CD8-positive, alpha-beta memory T cell (primary cell): ENCODE measurements at regions of chr1 and their contacts with region 1.

Region 1: DNA sequence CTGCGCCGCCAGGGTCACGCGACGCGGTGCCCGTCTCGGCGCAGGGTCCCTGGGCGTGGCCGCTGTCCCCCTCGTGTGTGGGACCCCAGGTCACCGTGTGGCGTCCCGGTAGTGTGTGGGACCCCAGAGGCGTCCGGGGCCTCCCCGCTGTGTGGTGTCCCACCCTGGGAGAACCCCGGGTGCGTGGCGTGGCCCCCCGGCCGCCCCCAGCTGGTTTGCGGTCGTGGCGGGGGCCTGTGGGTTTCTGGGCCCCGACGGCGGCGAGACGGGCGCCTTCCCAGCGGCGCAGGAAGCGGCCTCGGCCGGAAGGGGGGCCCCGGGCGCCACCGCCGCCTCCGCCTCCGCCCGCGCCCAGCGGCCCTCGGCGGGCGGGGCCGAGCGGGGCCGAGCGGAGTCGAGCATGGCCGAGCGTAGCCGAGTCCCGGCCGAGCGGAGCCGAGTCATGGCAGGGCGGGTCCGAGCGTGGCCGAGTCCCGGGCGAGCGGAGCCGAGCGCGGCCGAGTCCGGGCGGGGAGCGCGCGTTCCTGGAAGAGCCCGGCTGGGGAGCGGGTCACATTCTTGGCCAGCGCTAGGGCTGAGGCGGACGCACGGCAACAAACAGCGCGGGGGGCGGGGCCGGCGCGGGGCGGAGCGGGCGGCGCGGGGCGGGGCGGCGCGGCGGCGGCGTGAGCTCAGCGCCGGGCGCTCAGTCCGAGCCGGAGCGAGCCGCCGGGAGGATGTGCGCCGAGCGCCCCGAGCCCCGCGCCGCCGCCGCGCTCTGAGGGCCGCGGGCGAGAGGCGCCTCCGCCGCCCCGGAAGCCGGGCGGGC is 569 bp upstream of the SKI start:
- DNase-seq: peak; percentile 86 to 96 (median 95)
- H3K4me3 ChIP-seq: no peak overlapping the region
- H3K4me3 Mint-ChIP-seq: peak overlapping the region in 6 of 7 donors; percentile 61 to 90 (median 74)
- H3K27ac ChIP-seq: peak overlapping the region; percentile 51
- H3K27ac Mint-ChIP-seq: peak overlapping the region in 4 of 8 donors; percentile 60 to 86 (median 74)
- H3K4me1 ChIP-seq: peaks cover 26% of the 10 kb centered on the region
- H3K4me1 Mint-ChIP-seq: peaks cover 27 to 40% (median 36%) of the 10 kb centered on the region in 3 donors
- H3K27me3 ChIP-seq: no peaks in the 10 kb centered on the region
- H3K27me3 Mint-ChIP-seq: peaks cover 0 to 12% of the 10 kb centered on the region in 2 donors

Region 2: DNA sequence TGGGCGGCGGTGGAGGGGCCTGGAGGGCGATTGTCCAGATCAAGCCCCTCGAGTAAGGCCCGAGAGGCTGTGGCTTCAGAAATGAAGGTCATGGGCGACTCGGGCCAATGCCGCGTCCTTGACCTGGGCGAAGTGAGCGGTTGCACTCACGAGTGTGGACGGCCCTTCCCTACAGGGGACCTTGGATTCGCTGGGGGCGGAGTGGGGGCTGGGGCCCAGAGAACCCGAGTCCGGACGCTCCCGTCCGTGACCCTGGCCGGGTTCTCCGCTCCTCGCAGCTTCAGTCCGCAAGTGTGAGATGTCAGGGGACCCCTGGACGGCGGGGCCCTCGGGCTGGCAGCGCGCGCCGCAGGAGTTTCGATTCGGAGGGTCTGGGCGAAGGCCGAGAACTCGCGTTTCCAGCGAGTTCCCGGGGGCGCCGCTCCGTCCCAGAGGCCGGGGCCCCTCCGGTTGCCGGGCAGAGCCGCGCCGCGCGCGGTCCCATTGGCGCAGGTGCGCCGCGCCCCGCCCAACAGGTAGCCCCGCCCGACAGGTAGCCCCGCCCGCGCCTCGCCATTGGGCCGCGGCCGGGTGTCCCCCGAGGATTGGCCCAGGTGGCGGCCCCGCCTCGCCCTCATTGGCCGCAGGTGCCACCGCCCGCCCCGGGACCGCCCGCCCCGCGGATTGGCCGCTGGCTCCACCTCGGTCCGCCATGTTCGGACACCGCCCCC is 177.7 kb before region 1 on chr1 and contains the start of gene PRKCZ:
- CTCF ChIA-PET with region 1: no interaction called
- POLR2A ChIA-PET with region 1: no interaction called
- DNase-seq: peak; percentile 92 to 95 (median 94)
- H3K4me3 ChIP-seq: peak within 1 kb of the TSS; percentile 70
- H3K4me3 Mint-ChIP-seq: peak within 1 kb of the TSS; percentile 77 to 90 (median 83)
- H3K27ac ChIP-seq: peak within 1 kb of the TSS; percentile 43
- H3K27ac Mint-ChIP-seq: peak within 1 kb of the TSS in 7 of 8 donors; percentile 50 to 86 (median 68)
- H3K4me1 ChIP-seq: peaks cover 25% of the 10 kb centered on the region
- H3K4me1 Mint-ChIP-seq: peaks cover 13 to 41% (median 15%) of the 10 kb centered on the region in 3 donors
- H3K27me3 ChIP-seq: no peaks in the 10 kb centered on the region
- H3K27me3 Mint-ChIP-seq: peaks cover 6 to 8% of the 10 kb centered on the region in 2 donors
- total RNA-seq, gene PRKCZ: 13.8 to 15.4 TPM

Region 3: GRCh38 chr1:2279210-2279639 is 51.7 kb after region 1 on chr1:
- CTCF ChIA-PET with region 1: no interaction called
- POLR2A ChIA-PET with region 1: no interaction called
- DNase-seq: no peak
- H3K4me3 ChIP-seq: no peak overlapping the region
- H3K4me3 Mint-ChIP-seq: no peak overlapping the region
- H3K27ac ChIP-seq: no peak overlapping the region
- H3K27ac Mint-ChIP-seq: peak overlapping the region in 5 of 8 donors; percentile 42 to 89 (median 52)
- H3K4me1 ChIP-seq: peaks cover 38% of the 10 kb centered on the region
- H3K4me1 Mint-ChIP-seq: peaks cover 17 to 52% (median 19%) of the 10 kb centered on the region in 3 donors
- H3K27me3 ChIP-seq: no peaks in the 10 kb centered on the region
- H3K27me3 Mint-ChIP-seq: peaks cover 0 to 5% of the 10 kb centered on the region in 2 donors

Region 4: GRCh38 chr1:2314803-2315673 is 87.5 kb after region 1 on chr1:
- CTCF ChIA-PET with region 1: interaction called, 22 read pairs
- POLR2A ChIA-PET with region 1: interaction called, 6 read pairs
- DNase-seq: peak; percentile 58 to 84 (median 75)
- H3K4me3 ChIP-seq: peak overlapping the region; percentile 55
- H3K4me3 Mint-ChIP-seq: peak overlapping the region in 4 of 7 donors; percentile 41 to 74 (median 56)
- H3K27ac ChIP-seq: peak overlapping the region; percentile 38
- H3K27ac Mint-ChIP-seq: peak overlapping the region in 7 of 8 donors; percentile 30 to 96 (median 59)
- H3K4me1 ChIP-seq: peaks cover 44% of the 10 kb centered on the region
- H3K4me1 Mint-ChIP-seq: peaks cover 7 to 49% (median 10%) of the 10 kb centered on the region in 3 donors
- H3K27me3 ChIP-seq: no peaks in the 10 kb centered on the region
- H3K27me3 Mint-ChIP-seq: no peaks in the 10 kb centered on the region

Region 5: GRCh38 chr1:2391041-2391930 is 163.7 kb after region 1 on chr1 and contains the starts of genes MORN1 and RER1:
- CTCF ChIA-PET with region 1: interaction called, 3 read pairs
- POLR2A ChIA-PET with region 1: interaction called, 12 read pairs
- DNase-seq: peak; percentile 98 to 99 (median 99)
- H3K4me3 ChIP-seq: peak within 1 kb of the TSS; percentile 73
- H3K4me3 Mint-ChIP-seq: peak within 1 kb of the TSS; percentile 87 to 98 (median 90)
- H3K27ac ChIP-seq: peak within 1 kb of the TSS; percentile 82
- H3K27ac Mint-ChIP-seq: peak within 1 kb of the TSS; percentile 84 to 98 (median 92)
- H3K4me1 ChIP-seq: peaks cover 34% of the 10 kb centered on the region
- H3K4me1 Mint-ChIP-seq: peaks cover 27 to 49% (median 34%) of the 10 kb centered on the region in 3 donors
- H3K27me3 ChIP-seq: no peaks in the 10 kb centered on the region
- H3K27me3 Mint-ChIP-seq: no peaks in the 10 kb centered on the region
- total RNA-seq, gene MORN1: 9.4 to 10.4 TPM
- total RNA-seq, gene RER1: 214 to 222 TPM